ENCODE measurements at regions of chr6 and their contacts with region 1.

Region 1: GRCh38 chr6:43013843-43014433 is at the starts of genes KLHDC3 and MEA1:
- DNase-seq: peak; percentile 100
- ATAC-seq: peak; percentile 96
- H3K4me3 ChIP-seq: peak within 1 kb of the TSS; percentile 85
- H3K27ac ChIP-seq: peak within 1 kb of the TSS; percentile 60
- H3K4me1 ChIP-seq: peaks cover 7% of the 10 kb centered on the region
- H3K27me3 ChIP-seq: no peaks in the 10 kb centered on the region
- CTCF ChIP-seq: no peak
- EP300 ChIP-seq: no peak
- POLR2A ChIP-seq: peak; percentile 82
- RAD21 ChIP-seq: no peak
- polyA plus RNA-seq, gene KLHDC3: 2.4 to 8.9 TPM
- polyA plus RNA-seq, gene MEA1: 90.7 to 105 TPM

Region 2: DNA sequence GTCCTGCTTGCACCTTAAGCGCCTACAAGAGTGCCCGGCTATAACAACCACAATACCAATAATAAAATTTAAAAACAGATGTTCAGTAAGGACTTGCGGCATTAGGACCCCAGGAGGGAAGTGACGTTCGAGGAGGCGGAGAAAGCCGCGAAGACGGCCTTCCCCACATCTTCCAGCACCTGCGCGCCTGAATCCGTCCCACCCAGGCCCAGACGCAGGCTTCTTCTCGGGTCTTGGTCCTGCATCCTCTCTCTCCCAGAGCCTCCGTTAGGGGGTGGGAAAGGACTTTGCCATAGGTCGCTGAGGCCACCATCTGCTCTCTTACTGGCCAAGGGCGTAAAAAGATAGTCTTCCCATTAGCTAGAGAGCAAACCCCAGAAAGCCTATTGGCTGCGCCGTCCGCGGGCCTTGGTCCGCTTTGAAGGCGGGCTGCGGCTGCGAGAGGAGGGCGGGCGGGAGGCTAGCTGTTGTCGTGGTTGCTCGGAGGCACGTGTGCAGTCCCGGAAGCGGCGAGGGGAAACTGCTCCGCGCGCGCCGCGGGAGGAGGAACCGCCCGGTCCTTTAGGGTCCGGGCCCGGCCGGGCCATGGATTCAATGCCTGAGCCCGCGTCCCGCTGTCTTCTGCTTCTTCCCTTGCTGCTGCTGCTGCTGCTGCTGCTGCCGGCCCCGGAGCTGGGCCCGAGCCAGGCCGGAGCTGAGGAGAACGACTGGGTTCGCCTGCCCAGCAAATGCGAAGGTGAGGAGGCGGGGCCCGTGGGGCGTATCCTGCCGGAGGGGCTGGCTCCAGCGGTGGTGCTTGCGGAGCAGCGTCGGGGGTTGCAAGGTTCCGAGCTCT is 84.7 kb before region 1 on chr6 and contains the start of gene CNPY3:
- CTCF ChIA-PET with region 1: interaction called, 3 read pairs
- POLR2A ChIA-PET with region 1: interaction called, 20 read pairs
- RAD21 ChIA-PET with region 1: interaction called, 9 read pairs
- SMC1A ChIA-PET with region 1: interaction called, 13 read pairs
- in situ Hi-C with region 1: no loop called
- intact Hi-C with region 1: no loop called
- DNase-seq: peak; percentile 98
- ATAC-seq: peak; percentile 88
- H3K4me3 ChIP-seq: peak within 1 kb of the TSS; percentile 93
- H3K27ac ChIP-seq: peak within 1 kb of the TSS; percentile 96
- H3K4me1 ChIP-seq: peaks cover 17% of the 10 kb centered on the region
- H3K27me3 ChIP-seq: no peaks in the 10 kb centered on the region
- CTCF ChIP-seq: no peak
- EP300 ChIP-seq: peak in 1 of 2 experiments; percentile 72; a peak in 1 of 4 replicates
- POLR2A ChIP-seq: peak; percentile 87
- RAD21 ChIP-seq: no peak
- polyA plus RNA-seq, gene CNPY3: 7.2 to 14.6 TPM

Region 3: GRCh38 chr6:42984001-42984923 is 29.7 kb before region 1 on chr6 and contains the start of gene PPP2R5D:
- CTCF ChIA-PET with region 1: interaction called, 5 read pairs
- POLR2A ChIA-PET with region 1: interaction called, 22 read pairs
- RAD21 ChIA-PET with region 1: interaction called, 9 read pairs
- SMC1A ChIA-PET with region 1: interaction called, 9 read pairs
- in situ Hi-C with region 1: no loop called
- intact Hi-C with region 1: no loop called
- DNase-seq: peak; percentile 94
- ATAC-seq: peak; percentile 97
- H3K4me3 ChIP-seq: peak within 1 kb of the TSS; percentile 98
- H3K27ac ChIP-seq: peak within 1 kb of the TSS; percentile 79
- H3K4me1 ChIP-seq: peaks cover 23% of the 10 kb centered on the region
- H3K27me3 ChIP-seq: no peaks in the 10 kb centered on the region
- CTCF ChIP-seq: no peak
- EP300 ChIP-seq: no peak
- POLR2A ChIP-seq: peak; percentile 92
- RAD21 ChIP-seq: no peak
- polyA plus RNA-seq, gene PPP2R5D: 1.5 to 1.6 TPM

Region 4: GRCh38 chr6:43053545-43054205 is 39.7 kb after region 1 on chr6 and contains the start of gene CUL7:
- CTCF ChIA-PET with region 1: no interaction called
- POLR2A ChIA-PET with region 1: interaction called, 22 read pairs
- RAD21 ChIA-PET with region 1: interaction called, 8 read pairs
- SMC1A ChIA-PET with region 1: interaction called, 10 read pairs
- in situ Hi-C with region 1: no loop called
- intact Hi-C with region 1: no loop called
- DNase-seq: peak; percentile 73
- ATAC-seq: peak; percentile 100
- H3K4me3 ChIP-seq: peak within 1 kb of the TSS; percentile 91
- H3K27ac ChIP-seq: peak within 1 kb of the TSS; percentile 93
- H3K4me1 ChIP-seq: peaks cover 14% of the 10 kb centered on the region
- H3K27me3 ChIP-seq: no peaks in the 10 kb centered on the region
- CTCF ChIP-seq: no peak
- EP300 ChIP-seq: 0 out of 4 replicates have a peak, but pooled peaks of 1 of the 2 experiments have one; percentile 15
- POLR2A ChIP-seq: peak; percentile 94
- RAD21 ChIP-seq: no peak
- polyA plus RNA-seq, gene CUL7: 0.66 to 1.1 TPM

Region 5: DNA sequence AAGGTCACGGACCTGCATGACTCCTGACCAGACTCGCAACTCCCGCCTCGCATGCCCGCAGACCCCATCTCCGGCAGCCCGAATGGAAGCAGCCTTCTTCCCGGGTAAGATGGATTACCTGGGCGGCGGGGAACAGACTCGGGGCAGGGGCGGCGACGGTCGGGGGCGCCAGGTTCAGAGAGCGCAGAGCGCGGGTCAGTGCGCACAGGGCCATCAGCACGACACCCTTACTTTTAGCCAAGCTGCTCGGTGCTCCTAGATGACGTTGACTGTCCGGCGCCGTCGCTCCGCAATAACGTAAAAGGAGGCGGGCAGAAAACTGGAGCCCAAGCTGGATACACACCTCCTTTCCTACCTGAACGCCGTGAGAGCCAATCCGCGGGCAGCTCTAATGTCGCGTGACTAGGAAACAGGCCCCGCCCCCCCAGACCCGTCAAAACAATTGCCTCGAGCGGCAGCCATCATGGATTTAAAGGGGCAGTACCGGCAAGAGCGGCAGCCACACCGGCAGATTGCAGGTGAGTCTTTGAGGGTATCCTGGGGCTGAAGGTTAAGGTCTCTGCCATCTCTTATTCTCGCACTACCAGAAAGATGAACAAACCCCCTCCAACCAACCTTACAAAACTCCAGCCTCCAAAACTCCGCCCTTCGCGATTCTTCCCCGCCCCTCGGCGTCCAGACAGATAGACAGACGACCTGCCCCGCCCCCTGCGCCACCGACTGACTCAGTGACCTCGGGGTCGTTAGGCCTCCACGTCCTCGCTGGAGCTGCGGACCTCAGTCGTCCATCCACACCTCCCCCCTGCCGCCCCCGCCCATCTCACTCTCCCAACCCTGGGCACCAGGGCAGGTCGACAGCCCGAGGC is 45.5 kb after region 1 on chr6 and contains the starts of genes KLC4 and MRPL2:
- CTCF ChIA-PET with region 1: interaction called, 3 read pairs
- POLR2A ChIA-PET with region 1: interaction called, 22 read pairs
- RAD21 ChIA-PET with region 1: interaction called, 8 read pairs
- SMC1A ChIA-PET with region 1: interaction called, 10 read pairs
- in situ Hi-C with region 1: no loop called
- intact Hi-C with region 1: no loop called
- DNase-seq: peak; percentile 97
- ATAC-seq: peak; percentile 98
- H3K4me3 ChIP-seq: peak within 1 kb of the TSS; percentile 95
- H3K27ac ChIP-seq: peak within 1 kb of the TSS; percentile 87
- H3K4me1 ChIP-seq: peaks cover 3% of the 10 kb centered on the region; the same call in 1 of the 2 replicates
- H3K27me3 ChIP-seq: no peaks in the 10 kb centered on the region
- CTCF ChIP-seq: no peak
- EP300 ChIP-seq: no peak
- POLR2A ChIP-seq: peak; percentile 94
- RAD21 ChIP-seq: no peak
- polyA plus RNA-seq, gene KLC4: 0.90 to 2.4 TPM
- polyA plus RNA-seq, gene MRPL2: 29.7 to 42.1 TPM